ENCODE measurements at regions of chr14 and their contacts with region 1.

Region 1: GRCh38 chr14:67583711-67584644 is 16.1 kb downstream of the PIGH start:
- DNase-seq: no peak
- H3K4me3 ChIP-seq: no peak overlapping the region
- H3K27me3 ChIP-seq: no peaks in the 10 kb centered on the region
- CTCF ChIP-seq: peak; percentile 79

Region 2: DNA sequence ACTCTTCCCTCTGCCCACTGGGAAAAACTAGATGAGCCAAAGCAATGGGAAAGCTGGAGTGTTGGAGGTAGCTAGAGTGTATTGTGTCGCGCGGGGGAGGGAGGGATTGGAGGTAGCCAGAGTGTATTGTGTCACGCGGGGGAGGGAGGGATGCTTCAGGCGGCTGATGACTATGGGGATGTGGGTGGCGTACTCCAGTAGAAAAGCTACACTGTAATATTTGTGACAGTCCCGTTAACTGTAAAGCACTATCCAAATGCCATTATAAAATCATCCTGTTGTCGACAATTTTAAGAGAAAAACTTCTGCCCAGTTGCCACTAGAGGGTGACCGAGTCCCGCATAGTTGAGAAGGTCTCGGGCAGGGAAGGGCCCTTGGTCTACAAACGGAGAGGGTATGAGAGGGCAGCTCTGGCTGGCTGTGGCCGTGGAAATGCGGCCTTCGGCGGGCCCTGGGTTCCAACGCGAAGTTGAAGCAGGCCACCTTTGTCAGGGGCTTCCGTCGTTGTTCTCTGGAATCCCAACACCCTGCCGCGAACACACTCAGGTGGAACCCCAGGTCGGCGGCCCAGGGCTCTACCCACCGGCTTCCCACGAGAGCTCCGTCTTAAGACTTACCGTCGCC is 156.9 kb before region 1 on chr14:
- CTCF ChIA-PET with region 1: interaction called, 79 read pairs
- POLR2A ChIA-PET with region 1: no interaction called
- DNase-seq: no peak
- H3K4me3 ChIP-seq: no peak overlapping the region
- H3K27me3 ChIP-seq: no peaks in the 10 kb centered on the region; the same call in 1 of the 2 replicates
- CTCF ChIP-seq: peak; percentile 88

Region 3: DNA sequence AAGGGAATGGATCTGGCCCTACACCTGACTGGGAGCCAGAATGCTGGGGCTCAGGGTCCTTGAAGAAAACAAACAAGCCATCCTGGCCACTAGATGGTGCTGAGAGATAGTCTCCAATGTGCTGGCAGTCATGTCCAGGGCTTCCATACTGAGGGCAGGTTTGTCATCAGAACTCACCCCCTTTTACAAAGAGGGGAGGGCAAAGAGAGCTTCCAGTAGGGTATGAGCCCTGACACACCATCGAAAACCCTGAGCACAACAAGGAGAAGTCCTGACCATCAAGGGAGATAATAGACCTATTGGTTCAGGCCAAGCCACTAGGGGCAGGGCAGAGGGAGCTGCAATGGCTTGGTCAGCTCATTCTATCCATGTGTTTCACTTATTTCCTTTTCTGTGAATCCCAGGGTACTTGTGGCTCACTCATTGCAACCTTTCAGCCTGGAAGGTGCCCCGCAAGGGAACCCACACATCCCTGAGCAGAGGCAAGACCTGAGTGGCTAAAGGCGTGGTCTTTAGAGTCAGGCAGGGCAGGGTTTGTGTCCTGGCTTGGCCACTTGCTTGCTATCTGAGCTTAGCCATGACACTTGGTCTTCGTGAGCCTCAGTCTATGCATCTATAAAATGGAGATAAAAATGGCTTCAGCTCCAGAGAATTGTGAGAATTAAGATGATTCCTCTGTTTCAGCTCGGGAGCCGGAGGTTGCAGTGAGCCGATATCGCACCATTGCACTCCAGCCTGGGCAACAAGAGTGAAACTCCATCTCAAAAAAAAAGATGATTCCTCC is 57.1 kb before region 1 on chr14:
- CTCF ChIA-PET with region 1: interaction called, 11 read pairs
- POLR2A ChIA-PET with region 1: no interaction called
- DNase-seq: no peak
- H3K4me3 ChIP-seq: no peak overlapping the region
- H3K27me3 ChIP-seq: peaks cover 16% of the 10 kb centered on the region
- CTCF ChIP-seq: peak; percentile 77

Region 4: DNA sequence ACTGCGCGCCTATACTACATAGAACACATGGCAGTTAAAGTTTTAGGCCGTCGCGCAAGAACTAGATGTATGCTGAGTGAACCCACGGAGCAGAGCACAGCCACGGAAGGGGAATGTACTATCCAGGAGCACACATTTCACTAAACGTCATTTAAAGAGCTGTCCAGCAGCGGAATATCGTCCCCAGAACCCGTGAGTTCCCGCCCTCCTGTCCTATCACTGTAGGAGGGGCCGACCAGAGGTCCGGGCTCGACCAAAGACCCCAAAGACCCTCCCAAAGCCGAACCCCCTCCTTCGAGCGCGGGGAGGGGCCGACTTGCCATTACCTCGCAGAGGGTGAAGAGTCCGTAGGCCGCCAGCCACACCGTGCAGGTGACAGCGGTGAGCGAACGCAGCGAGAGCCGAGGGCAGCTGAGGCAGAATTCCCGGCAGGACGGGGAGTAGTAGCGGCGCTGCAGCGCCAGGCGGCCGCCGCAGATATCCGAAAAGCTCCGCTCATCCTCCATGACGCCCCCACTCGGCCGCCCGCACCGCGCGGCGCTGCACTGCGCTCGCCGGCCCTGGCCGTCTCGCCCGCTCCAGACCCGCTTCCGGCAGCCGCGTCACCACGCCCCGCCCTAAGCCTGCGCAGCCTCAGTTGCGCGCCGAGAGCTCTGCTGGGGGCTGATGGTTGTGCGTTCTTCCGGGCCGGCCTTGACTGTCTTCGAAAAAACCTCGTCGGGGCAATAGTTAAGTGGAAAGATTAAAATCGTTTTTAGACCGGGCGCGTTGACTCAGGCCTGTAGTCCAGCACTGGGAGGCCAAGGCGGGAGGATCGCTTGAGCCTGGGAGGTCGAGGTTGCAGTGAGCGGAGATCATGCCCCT is 16.0 kb after region 1 on chr14 and contains the start of gene PIGH:
- CTCF ChIA-PET with region 1: interaction called, 23 read pairs
- POLR2A ChIA-PET with region 1: no interaction called
- DNase-seq: peak; percentile 17
- H3K4me3 ChIP-seq: peak within 1 kb of the TSS; percentile 94
- H3K27me3 ChIP-seq: no peaks in the 10 kb centered on the region; the same call in 1 of the 2 replicates
- CTCF ChIP-seq: peak; percentile 57
- polyA plus RNA-seq, gene PIGH: 18.3 and 19.0 TPM in 2 replicates

Region 5: GRCh38 chr14:67666750-67667449 is 82.9 kb after region 1 on chr14:
- CTCF ChIA-PET with region 1: interaction called, 16 read pairs
- POLR2A ChIA-PET with region 1: interaction called, 3 read pairs
- DNase-seq: no peak
- H3K4me3 ChIP-seq: no peak overlapping the region
- H3K27me3 ChIP-seq: no peaks in the 10 kb centered on the region
- CTCF ChIP-seq: peak; percentile 65

Region 6: DNA sequence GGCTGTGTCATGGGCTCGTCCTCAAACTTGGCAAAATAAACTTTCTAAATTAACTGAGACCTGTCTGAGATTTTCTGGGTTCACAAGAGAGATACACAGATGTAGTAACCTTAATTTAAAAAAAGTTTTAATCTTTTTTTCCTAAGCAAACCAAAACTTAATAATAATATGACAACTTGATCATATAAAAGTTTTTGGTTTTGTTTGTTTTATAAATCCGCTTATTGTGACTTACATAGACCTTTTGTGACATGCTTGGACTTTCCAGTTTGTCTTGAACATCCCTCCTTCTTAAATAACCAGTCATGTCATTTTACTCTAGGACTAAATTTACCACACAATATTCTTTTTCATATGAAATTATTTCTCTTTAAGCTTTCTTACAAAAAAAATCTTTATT is 126.2 kb after region 1 on chr14:
- CTCF ChIA-PET with region 1: interaction called, 189 read pairs
- POLR2A ChIA-PET with region 1: no interaction called
- DNase-seq: no peak
- H3K4me3 ChIP-seq: no peak overlapping the region
- H3K27me3 ChIP-seq: peaks cover 1% of the 10 kb centered on the region; the same call in 1 of the 2 replicates
- CTCF ChIP-seq: no peak